ENCODE measurements at regions of chr10 and their contacts with region 1.

Region 1: DNA sequence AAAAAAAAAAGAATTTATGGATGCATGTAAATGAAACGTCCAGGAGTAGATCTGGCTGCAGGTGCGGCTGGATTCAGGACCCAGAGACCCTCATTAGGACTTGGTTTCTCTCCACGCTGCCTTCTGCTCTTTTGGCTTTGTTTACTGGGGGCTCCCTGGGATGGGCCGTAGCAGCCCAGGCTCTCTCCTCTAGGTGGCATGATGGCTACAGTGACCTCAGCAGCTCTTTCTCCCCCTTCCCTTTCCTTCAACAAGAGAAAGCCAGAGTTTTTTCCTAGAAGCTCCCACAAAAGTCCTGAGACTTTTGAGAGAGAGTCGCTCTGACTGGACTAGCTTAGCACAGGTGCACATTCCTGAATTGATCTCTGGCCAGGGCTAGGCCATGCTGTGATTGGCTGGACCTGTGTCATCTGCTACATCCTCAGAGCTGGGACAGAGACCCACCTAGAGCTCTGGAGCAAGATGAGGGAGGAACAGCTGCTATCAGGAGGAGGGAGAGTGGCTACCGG is 67.8 kb upstream of the PDCD4 start:
- DNase-seq: peak in 6 of 10 donors; percentile 42 to 62 (median 56)
- H3K4me3 ChIP-seq: peak overlapping the region in 6 of 59 donors; percentile 1 to 31 (median 17)
- H3K27ac ChIP-seq: peak overlapping the region in 15 of 59 donors; percentile 9 to 70 (median 38)
- H3K27me3 ChIP-seq: no peaks in the 10 kb centered on the region
- CTCF ChIP-seq: peak in 55 of 56 donors; percentile 35 to 85 (median 68)

Region 2: DNA sequence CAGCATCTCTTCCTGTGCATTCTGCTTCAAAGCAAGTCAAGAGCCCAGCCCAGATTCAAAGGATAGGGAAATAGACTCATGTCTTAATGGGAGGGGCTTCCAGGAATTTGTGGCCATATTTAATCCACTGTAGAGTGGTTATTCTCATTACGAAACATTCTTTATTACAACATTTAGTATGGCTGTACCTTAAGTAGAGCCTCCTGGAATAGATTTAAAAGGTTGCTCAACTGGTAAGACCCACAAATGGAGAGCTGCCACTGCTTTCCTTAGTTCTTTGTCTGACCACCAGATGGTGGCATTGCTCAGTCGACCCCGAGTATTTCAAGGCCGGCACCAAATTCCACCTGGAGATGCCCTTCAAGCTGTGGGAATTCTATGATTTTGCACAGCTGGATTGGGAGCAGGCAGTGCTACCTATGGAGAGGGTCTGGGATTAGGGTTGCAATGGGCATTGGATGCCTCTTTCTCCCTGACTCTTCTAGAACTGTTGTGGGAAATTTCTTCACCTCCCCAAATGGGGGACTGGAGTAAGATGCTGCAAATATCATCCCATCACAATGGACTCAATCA is 57.5 kb before region 1 on chr10:
- intact Hi-C with region 1: loop called in 1 of 2 experiments (anchors 5 kb)
- DNase-seq: peak in 9 of 10 donors; percentile 24 to 73 (median 61)
- H3K4me3 ChIP-seq: no peak overlapping the region
- H3K27ac ChIP-seq: peak overlapping the region in 1 of 59 donors; percentile 18
- H3K27me3 ChIP-seq: peaks cover 0 to 3% (median 0%) of the 10 kb centered on the region in 45 donors
- CTCF ChIP-seq: peak; percentile 63 to 96 (median 87)

Region 3: DNA sequence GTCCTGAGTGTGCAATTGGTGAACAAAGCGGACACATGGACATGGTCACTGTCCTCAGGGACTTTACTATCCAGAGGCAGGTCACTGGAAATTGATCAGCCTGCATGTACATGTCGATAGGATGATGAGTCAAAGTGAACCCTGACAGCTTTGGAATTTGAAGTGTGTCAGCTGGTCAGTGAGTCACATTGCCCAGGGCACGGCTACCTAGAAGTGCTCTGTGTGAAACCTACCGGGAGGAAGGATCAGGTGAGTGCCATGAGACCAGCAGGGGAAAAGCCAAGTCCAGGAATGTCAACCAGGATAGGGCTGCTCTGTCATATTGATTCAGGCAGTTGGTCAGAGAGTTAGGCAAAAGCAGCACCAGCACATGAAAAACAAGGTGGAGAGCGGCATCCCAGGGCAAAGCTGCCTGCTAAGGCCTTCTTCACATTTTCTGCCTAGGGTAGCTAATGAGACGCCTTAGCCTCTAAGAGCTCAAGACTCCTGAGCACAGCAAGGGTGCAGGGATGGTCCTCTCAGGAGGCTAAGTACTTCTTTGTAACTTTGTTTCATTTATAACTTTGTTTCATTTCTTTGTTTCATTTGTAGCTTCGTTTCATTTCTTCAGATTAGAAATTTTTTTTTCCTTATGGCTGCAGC is 48.5 kb after region 1 on chr10:
- intact Hi-C with region 1: loop called in 1 of 2 experiments (anchors 5 kb)
- DNase-seq: no peak
- H3K4me3 ChIP-seq: no peak overlapping the region
- H3K27ac ChIP-seq: no peak overlapping the region
- H3K27me3 ChIP-seq: no peaks in the 10 kb centered on the region
- CTCF ChIP-seq: no peak

Region 4: GRCh38 chr10:110871298-110872084 is 67.6 kb after region 1 on chr10 and contains the start of gene PDCD4:
- intact Hi-C with region 1: loop called (anchors 2 to 5 kb)
- DNase-seq: peak; percentile 99 to 100 (median 100)
- H3K4me3 ChIP-seq: peak within 1 kb of the TSS; percentile 53 to 99 (median 94)
- H3K27ac ChIP-seq: peak within 1 kb of the TSS; percentile 78 to 99 (median 98)
- H3K27me3 ChIP-seq: no peaks in the 10 kb centered on the region
- CTCF ChIP-seq: peak in 15 of 56 donors; percentile 3 to 22 (median 6)
- total RNA-seq, gene PDCD4: 45.2 to 105 (median 67.9) TPM

Region 5: GRCh38 chr10:110893559-110894179 is 89.8 kb after region 1 on chr10:
- intact Hi-C with region 1: loop called (anchors 5 kb)
- DNase-seq: no peak
- H3K4me3 ChIP-seq: no peak overlapping the region
- H3K27ac ChIP-seq: peak overlapping the region in 3 of 59 donors; percentile 7 to 23 (median 8)
- H3K27me3 ChIP-seq: no peaks in the 10 kb centered on the region
- CTCF ChIP-seq: peak; percentile 51 to 90 (median 78)

Region 6: GRCh38 chr10:110918643-110919363 is 114.9 kb after region 1 on chr10 and contains the start of gene BBIP1:
- intact Hi-C with region 1: loop called in 1 of 2 experiments (anchors 5 kb)
- DNase-seq: peak in 4 of 10 donors; percentile 55 to 90 (median 77)
- H3K4me3 ChIP-seq: peak within 1 kb of the TSS; percentile 67 to 97 (median 86)
- H3K27ac ChIP-seq: peak within 1 kb of the TSS; percentile 74 to 100 (median 97)
- H3K27me3 ChIP-seq: no peaks in the 10 kb centered on the region
- CTCF ChIP-seq: peak in 26 of 56 donors; percentile 1 to 37 (median 13)
- total RNA-seq, gene BBIP1: 34.7 to 77.1 (median 51.3) TPM

Measured in dorsolateral prefrontal cortex (tissue), 120 donors.